ENCODE measurements at regions of chr2 and their contacts with region 1.

Region 1: GRCh38 chr2:135997380-135997779 is 12.0 kb upstream of the DARS1 start:
- DNase-seq: peak; percentile 83
- ATAC-seq: peak; percentile 95
- H3K4me3 ChIP-seq: peak overlapping the region in 3 of 5 experiments; percentile 8 to 17 (median 10)
- H3K4me3 Mint-ChIP-seq: peak overlapping the region; percentile 74
- H3K27ac ChIP-seq: peak overlapping the region; percentile 47 to 50
- H3K27ac Mint-ChIP-seq: peak overlapping the region; percentile 79
- H3K4me1 ChIP-seq: peaks cover 52 to 57% of the 10 kb centered on the region in 2 donors
- H3K4me1 Mint-ChIP-seq: peaks cover 51% of the 10 kb centered on the region
- H3K27me3 ChIP-seq: no peaks in the 10 kb centered on the region
- H3K27me3 Mint-ChIP-seq: no peaks in the 10 kb centered on the region
- CTCF ChIP-seq: peak; percentile 26

Region 2: GRCh38 chr2:135985018-135985825 is 12.2 kb before region 1 on chr2 and contains the start of gene DARS1:
- CTCF ChIA-PET with region 1: interaction called, 32 read pairs
- POLR2A ChIA-PET with region 1: interaction called, 8 read pairs
- intact Hi-C with region 1: loop called (anchors 1 kb)
- DNase-seq: peak; percentile 91
- ATAC-seq: peak; percentile 84
- H3K4me3 ChIP-seq: peak within 1 kb of the TSS; percentile 75 to 99 (median 93)
- H3K4me3 Mint-ChIP-seq: peak within 1 kb of the TSS; percentile 97
- H3K27ac ChIP-seq: peak within 1 kb of the TSS; percentile 94 to 97
- H3K27ac Mint-ChIP-seq: peak within 1 kb of the TSS; percentile 98
- H3K4me1 ChIP-seq: peaks cover 29 to 31% of the 10 kb centered on the region in 2 donors
- H3K4me1 Mint-ChIP-seq: peaks cover 50% of the 10 kb centered on the region
- H3K27me3 ChIP-seq: no peaks in the 10 kb centered on the region
- H3K27me3 Mint-ChIP-seq: no peaks in the 10 kb centered on the region
- CTCF ChIP-seq: no peak
- total RNA-seq, gene DARS1: 88.3 and 92.0 TPM in 2 replicates

Region 3: DNA sequence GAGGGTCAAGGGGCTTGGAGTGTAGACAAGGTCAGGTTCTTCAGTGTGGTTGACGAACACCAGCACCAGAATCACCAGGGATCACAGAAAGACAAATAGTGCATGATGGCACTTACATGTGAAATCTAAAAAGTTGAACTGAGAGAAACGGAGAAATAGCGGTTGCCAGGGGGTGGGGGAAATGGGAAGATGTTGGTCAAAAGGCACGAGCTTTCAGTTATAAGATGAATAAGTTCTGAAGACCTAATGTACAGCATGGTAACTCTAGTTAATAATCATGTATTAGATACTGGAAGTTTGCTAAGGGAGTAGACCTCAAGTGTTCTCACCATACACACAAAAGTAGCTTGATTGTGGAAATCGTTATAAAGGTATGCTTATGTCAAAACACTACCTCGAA is 31.8 kb after region 1 on chr2:
- CTCF ChIA-PET with region 1: no interaction called
- POLR2A ChIA-PET with region 1: no interaction called
- intact Hi-C with region 1: no loop called
- DNase-seq: no peak
- ATAC-seq: no peak
- H3K4me3 ChIP-seq: no peak overlapping the region
- H3K4me3 Mint-ChIP-seq: no peak overlapping the region
- H3K27ac ChIP-seq: no peak overlapping the region
- H3K27ac Mint-ChIP-seq: no peak overlapping the region
- H3K4me1 ChIP-seq: peaks cover 5 to 9% of the 10 kb centered on the region in 2 donors
- H3K4me1 Mint-ChIP-seq: peaks cover 17% of the 10 kb centered on the region
- H3K27me3 ChIP-seq: no peaks in the 10 kb centered on the region
- H3K27me3 Mint-ChIP-seq: no peaks in the 10 kb centered on the region
- CTCF ChIP-seq: no peak

Region 4: DNA sequence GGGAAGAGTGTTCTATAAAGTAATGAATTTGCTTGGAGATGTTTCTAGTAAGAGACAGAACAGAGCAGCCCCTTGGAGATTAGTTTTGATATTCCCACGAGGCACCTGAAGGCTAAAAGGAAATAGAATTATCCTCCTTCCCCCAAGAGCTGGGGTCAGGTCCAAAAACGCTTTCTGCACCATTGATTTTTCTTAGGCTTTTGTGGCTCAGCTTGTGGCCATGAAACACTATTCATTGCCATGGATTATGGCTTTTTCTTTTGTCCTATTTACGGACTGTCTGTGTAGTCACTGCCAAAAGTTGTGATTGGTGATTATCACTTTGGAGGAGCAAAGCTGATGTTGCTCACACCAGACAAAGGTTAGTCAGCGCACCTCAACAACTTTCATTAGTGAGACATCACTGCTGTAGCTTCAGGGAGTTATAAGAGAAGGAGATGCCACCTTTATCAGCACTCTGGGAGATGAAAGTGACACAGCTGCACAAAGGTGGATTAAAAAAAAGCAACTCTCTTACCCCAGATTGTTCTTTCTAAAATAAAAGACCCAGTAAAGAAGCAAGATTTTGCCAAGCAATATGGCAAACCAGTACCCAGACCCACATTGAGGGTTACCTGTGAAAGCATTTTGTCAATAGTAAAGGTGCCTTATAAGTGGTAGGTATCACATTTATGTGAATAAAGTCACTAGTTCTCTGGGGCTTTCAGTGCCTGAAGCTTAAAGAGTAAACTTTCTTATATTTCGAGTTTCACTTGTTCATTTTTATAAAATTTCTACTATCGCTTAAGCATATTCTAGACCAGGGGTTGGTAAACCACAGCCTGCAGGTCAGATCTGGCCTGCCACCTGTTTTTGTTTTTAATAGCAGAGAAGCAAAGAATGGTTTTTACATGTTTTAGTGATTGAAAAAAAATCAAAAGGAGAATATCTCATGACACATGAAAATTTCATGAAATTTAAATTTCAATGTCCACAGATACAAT is 110.0 kb after region 1 on chr2:
- CTCF ChIA-PET with region 1: interaction called, 22 read pairs
- POLR2A ChIA-PET with region 1: no interaction called
- intact Hi-C with region 1: no loop called
- DNase-seq: peak; percentile 21
- ATAC-seq: no peak
- H3K4me3 ChIP-seq: no peak overlapping the region
- H3K4me3 Mint-ChIP-seq: peak overlapping the region; percentile 46
- H3K27ac ChIP-seq: peak overlapping the region; percentile 14 to 16
- H3K27ac Mint-ChIP-seq: peak overlapping the region; percentile 64
- H3K4me1 ChIP-seq: peaks cover 47 to 49% of the 10 kb centered on the region in 2 donors
- H3K4me1 Mint-ChIP-seq: peaks cover 57% of the 10 kb centered on the region
- H3K27me3 ChIP-seq: no peaks in the 10 kb centered on the region
- H3K27me3 Mint-ChIP-seq: no peaks in the 10 kb centered on the region
- CTCF ChIP-seq: no peak

Region 5: GRCh38 chr2:136112317-136113208 is 115.2 kb after region 1 on chr2:
- CTCF ChIA-PET with region 1: interaction called, 22 read pairs
- POLR2A ChIA-PET with region 1: interaction called, 15 read pairs
- intact Hi-C with region 1: no loop called
- DNase-seq: peak; percentile 48
- ATAC-seq: no peak
- H3K4me3 ChIP-seq: no peak overlapping the region
- H3K4me3 Mint-ChIP-seq: peak overlapping the region; percentile 98
- H3K27ac ChIP-seq: no peak overlapping the region
- H3K27ac Mint-ChIP-seq: peak overlapping the region; percentile 69
- H3K4me1 ChIP-seq: peaks cover 70 to 72% of the 10 kb centered on the region in 2 donors
- H3K4me1 Mint-ChIP-seq: peaks cover 74% of the 10 kb centered on the region
- H3K27me3 ChIP-seq: no peaks in the 10 kb centered on the region
- H3K27me3 Mint-ChIP-seq: no peaks in the 10 kb centered on the region
- CTCF ChIP-seq: no peak

Region 6: GRCh38 chr2:136378712-136379595 is 381.6 kb after region 1 on chr2:
- CTCF ChIA-PET with region 1: interaction called, 72 read pairs
- POLR2A ChIA-PET with region 1: interaction called, 6 read pairs
- intact Hi-C with region 1: no loop called
- DNase-seq: peak; percentile 90
- ATAC-seq: peak; percentile 29
- H3K4me3 ChIP-seq: peak overlapping the region in 1 of 5 experiments; percentile 8
- H3K4me3 Mint-ChIP-seq: peak overlapping the region; percentile 49
- H3K27ac ChIP-seq: peak overlapping the region in 1 of 2 donors; percentile 71
- H3K27ac Mint-ChIP-seq: peak overlapping the region; percentile 97
- H3K4me1 ChIP-seq: peaks cover 61 to 65% of the 10 kb centered on the region in 2 donors
- H3K4me1 Mint-ChIP-seq: peaks cover 81% of the 10 kb centered on the region
- H3K27me3 ChIP-seq: no peaks in the 10 kb centered on the region
- H3K27me3 Mint-ChIP-seq: no peaks in the 10 kb centered on the region
- CTCF ChIP-seq: peak; percentile 88